Activated CD4-positive, alpha-beta memory T cell treated with anti-CD3 and anti-CD28 coated beads for 36 hours (primary cell): ENCODE measurements at regions of chr17 and their contacts with region 1.

Region 1: DNA sequence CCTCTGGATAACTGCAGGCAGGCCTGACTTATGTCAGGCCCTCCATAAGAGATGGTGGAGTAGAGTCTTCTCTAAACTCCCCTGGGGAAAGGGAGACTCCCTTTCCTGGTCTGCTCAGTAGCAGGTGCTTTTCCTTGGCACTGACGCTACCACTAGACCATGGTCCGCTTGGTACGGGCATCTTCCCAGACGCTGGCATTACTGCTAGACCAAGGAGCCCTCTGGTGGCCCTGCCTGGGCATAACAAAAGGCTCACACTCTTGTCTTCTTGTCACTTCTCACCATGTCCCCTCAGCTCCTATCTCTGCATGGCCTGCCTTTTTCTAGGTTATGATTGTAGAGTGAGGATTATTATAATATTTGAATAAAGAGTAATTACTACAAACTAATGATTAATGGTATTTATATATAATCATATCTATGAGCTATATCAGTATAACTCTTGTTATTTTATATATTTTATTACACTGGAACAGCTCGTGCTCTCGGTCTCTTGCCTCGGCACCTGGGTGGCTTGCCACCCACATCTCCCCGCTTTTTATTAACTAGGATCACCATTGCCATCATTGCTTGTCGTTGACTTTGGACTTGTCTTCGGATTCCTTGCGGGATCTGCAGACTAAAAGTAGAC is 59.8 kb upstream of the ARL4D start:
- DNase-seq: peak; percentile 74
- H3K4me3 Mint-ChIP-seq: no peak overlapping the region
- H3K27ac Mint-ChIP-seq: no peak overlapping the region
- H3K4me1 Mint-ChIP-seq: peaks cover 30% of the 10 kb centered on the region
- H3K27me3 Mint-ChIP-seq: no peaks in the 10 kb centered on the region

Region 2: GRCh38 chr17:43351691-43352090 is 12.7 kb after region 1 on chr17:
- CTCF ChIA-PET with region 1: interaction called, 12 read pairs
- POLR2A ChIA-PET with region 1: interaction called, 126 read pairs
- intact Hi-C with region 1: loop called (anchors 1 kb)
- DNase-seq: peak; percentile 34
- H3K4me3 Mint-ChIP-seq: no peak overlapping the region
- H3K27ac Mint-ChIP-seq: no peak overlapping the region
- H3K4me1 Mint-ChIP-seq: peaks cover 14% of the 10 kb centered on the region
- H3K27me3 Mint-ChIP-seq: no peaks in the 10 kb centered on the region

Region 3: GRCh38 chr17:43360739-43361505 is 21.9 kb after region 1 on chr17:
- CTCF ChIA-PET with region 1: interaction called, 14 read pairs
- POLR2A ChIA-PET with region 1: interaction called, 126 read pairs
- intact Hi-C with region 1: loop called (anchors 1 kb)
- DNase-seq: peak; percentile 93
- H3K4me3 Mint-ChIP-seq: peak overlapping the region; percentile 86
- H3K27ac Mint-ChIP-seq: peak overlapping the region; percentile 99
- H3K4me1 Mint-ChIP-seq: peaks cover 29% of the 10 kb centered on the region
- H3K27me3 Mint-ChIP-seq: peaks cover 11% of the 10 kb centered on the region

Region 4: DNA sequence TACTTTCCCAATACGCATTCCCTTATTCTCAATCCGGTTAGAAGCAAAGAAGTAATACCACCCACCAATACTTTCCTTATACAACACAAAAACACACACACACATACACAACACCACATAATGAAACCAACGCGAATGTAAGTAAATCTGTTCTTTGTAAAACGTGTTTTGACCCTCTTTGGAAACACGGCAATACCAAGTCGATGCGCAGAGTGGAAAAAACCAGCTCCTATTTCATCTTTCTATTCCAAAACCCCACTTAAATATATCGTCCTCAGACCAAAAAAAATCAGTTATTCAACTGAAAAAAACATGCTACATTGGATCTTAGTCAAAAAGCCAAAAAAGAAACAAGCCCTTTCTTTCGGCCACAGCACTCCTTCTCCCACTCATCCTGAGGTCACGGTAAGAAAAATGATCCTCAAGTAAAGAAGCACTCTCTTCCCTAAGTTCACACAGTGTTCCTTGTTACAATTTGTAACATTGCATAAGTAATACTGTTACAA is 28.8 kb after region 1 on chr17:
- CTCF ChIA-PET with region 1: interaction called, 5 read pairs
- POLR2A ChIA-PET with region 1: interaction called, 72 read pairs
- intact Hi-C with region 1: no loop called
- DNase-seq: peak; percentile 49
- H3K4me3 Mint-ChIP-seq: peak overlapping the region; percentile 94
- H3K27ac Mint-ChIP-seq: peak overlapping the region; percentile 100
- H3K4me1 Mint-ChIP-seq: peaks cover 36% of the 10 kb centered on the region
- H3K27me3 Mint-ChIP-seq: no peaks in the 10 kb centered on the region

Region 5: DNA sequence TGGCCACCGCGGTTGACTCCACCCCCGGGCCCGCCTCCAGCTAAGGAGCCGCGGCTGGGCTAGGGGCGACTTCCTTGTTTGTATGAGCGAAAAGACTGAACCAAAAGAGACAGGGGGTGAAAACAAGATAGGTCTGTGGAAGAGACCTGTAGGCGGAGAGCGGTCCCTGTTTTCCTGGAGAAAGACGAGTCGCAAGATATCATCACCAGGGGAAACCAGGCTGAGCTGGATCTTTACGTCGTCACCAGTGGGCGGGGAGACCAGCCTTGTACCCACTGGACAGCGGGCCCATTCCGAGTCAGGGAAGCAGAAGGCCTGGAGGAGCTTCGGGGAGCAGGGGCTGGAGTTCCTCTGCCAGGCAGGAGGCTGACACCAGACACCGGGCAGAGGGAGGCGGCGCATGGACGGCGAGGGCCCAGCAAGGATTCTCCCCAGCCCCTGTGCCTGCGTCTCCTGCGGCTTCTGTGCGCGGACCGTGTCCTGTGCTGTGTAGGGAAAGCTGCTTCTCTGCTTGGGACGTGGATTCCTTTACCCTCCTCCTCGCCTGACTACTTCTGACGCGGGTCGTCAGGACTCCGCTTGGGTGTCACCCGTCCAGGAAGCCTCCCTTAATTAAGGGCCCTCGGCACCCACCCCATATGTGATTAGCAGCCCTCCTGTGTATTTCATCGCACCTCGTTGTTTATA is 49.5 kb after region 1 on chr17:
- CTCF ChIA-PET with region 1: interaction called, 8 read pairs
- POLR2A ChIA-PET with region 1: interaction called, 9 read pairs
- intact Hi-C with region 1: loop called (anchors 1 kb)
- DNase-seq: peak; percentile 94
- H3K4me3 Mint-ChIP-seq: peak overlapping the region; percentile 87
- H3K27ac Mint-ChIP-seq: peak overlapping the region; percentile 97
- H3K4me1 Mint-ChIP-seq: peaks cover 18% of the 10 kb centered on the region
- H3K27me3 Mint-ChIP-seq: no peaks in the 10 kb centered on the region